CD4-positive, alpha-beta T cell (primary cell): ENCODE measurements at regions of chr4 and their contacts with region 1.

Region 1: GRCh38 chr4:21307709-21308108 is 607.5 kb downstream of the PACRGL start:
- DNase-seq: no peak
- ATAC-seq: no peak
- H3K4me3 ChIP-seq: no peak overlapping the region
- H3K4me3 Mint-ChIP-seq: no peak overlapping the region
- H3K27ac ChIP-seq: no peak overlapping the region
- H3K27ac Mint-ChIP-seq: no peak overlapping the region
- H3K4me1 ChIP-seq: no peaks in the 10 kb centered on the region
- H3K4me1 Mint-ChIP-seq: no peaks in the 10 kb centered on the region
- H3K27me3 ChIP-seq: peaks cover 5 to 7% of the 10 kb centered on the region in 2 experiments
- H3K27me3 Mint-ChIP-seq: peaks cover 30% of the 10 kb centered on the region
- CTCF ChIP-seq: no peak

Region 2: GRCh38 chr4:21363701-21364100 is 56.0 kb after region 1 on chr4:
- CTCF ChIA-PET with region 1: no interaction called
- POLR2A ChIA-PET with region 1: no interaction called
- intact Hi-C with region 1: no loop called
- DNase-seq: no peak
- ATAC-seq: no peak
- H3K4me3 ChIP-seq: no peak overlapping the region
- H3K4me3 Mint-ChIP-seq: no peak overlapping the region
- H3K27ac ChIP-seq: no peak overlapping the region
- H3K27ac Mint-ChIP-seq: no peak overlapping the region
- H3K4me1 ChIP-seq: no peaks in the 10 kb centered on the region
- H3K4me1 Mint-ChIP-seq: no peaks in the 10 kb centered on the region
- H3K27me3 ChIP-seq: no peaks in the 10 kb centered on the region
- H3K27me3 Mint-ChIP-seq: no peaks in the 10 kb centered on the region
- CTCF ChIP-seq: no peak

Region 3: GRCh38 chr4:21377046-21377445 is 69.3 kb after region 1 on chr4:
- CTCF ChIA-PET with region 1: no interaction called
- POLR2A ChIA-PET with region 1: no interaction called
- intact Hi-C with region 1: loop called in 1 of 2 experiments (anchors 10 kb)
- DNase-seq: no peak
- ATAC-seq: no peak
- H3K4me3 ChIP-seq: no peak overlapping the region
- H3K4me3 Mint-ChIP-seq: no peak overlapping the region
- H3K27ac ChIP-seq: no peak overlapping the region
- H3K27ac Mint-ChIP-seq: no peak overlapping the region
- H3K4me1 ChIP-seq: no peaks in the 10 kb centered on the region
- H3K4me1 Mint-ChIP-seq: no peaks in the 10 kb centered on the region
- H3K27me3 ChIP-seq: no peaks in the 10 kb centered on the region
- H3K27me3 Mint-ChIP-seq: no peaks in the 10 kb centered on the region
- CTCF ChIP-seq: no peak